ENCODE measurements at regions of chr22 and their contacts with region 1.

Region 1: DNA sequence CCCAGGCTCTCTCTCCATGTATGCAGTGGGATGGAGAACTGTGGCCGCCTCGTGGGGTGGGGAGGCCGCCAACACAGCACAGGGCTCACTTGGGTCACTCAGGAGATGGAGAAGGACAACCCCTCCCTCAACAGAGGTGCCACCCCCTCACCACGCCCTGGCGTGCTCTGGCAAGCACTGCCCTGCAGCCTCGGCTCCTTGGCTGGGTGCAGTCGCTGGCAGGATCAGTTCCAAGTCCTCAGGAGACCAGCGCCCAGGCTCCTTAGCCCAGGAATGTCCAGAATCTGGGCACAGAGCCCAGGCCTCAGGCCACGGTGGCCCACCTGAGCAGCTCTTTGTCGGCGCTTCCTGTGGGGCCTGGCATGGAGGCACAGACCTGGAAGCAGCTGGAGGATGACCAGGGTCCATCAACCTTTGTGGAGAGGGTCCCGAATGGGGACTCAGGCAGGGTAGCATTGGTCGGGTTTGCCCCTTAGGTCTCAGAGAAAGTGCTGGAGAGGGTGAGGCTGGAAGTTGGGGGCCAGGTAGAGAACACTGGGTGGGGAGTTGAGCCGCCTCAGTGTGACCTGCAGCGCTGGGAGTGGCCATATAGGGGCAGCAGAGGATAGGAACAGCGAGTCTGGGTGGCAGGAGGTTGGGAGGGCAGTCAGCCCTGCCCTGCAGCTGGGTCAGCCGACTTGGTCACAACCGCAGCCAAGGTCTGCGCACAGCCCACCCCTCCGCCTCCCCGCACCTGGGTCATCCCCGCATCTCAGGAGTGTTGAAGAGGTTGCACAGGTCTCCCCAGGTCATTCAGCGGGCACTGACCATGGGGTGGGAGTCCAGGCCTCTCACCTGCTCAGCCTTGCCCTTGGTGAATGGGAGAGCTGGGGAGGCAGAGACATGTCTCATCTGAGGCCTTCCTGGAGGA is 8.2 kb downstream of the SUSD2 start:
- DNase-seq: peak; percentile 74 to 81
- ATAC-seq: peak; percentile 86 to 96 (median 90)
- H3K4me3 ChIP-seq: no peak overlapping the region
- H3K27ac ChIP-seq: no peak overlapping the region
- H3K4me1 ChIP-seq: no peaks in the 10 kb centered on the region
- H3K27me3 ChIP-seq: peaks cover 0 to 2% (median 0%) of the 10 kb centered on the region in 3 donors
- CTCF ChIP-seq: peak; percentile 77

Region 2: GRCh38 chr22:24230911-24231656 is 41.6 kb after region 1 on chr22:
- intact Hi-C with region 1: loop called in 1 of 2 experiments (anchors 5 kb)
- DNase-seq: peak in 1 of 2 donors; percentile 65
- ATAC-seq: no peak
- H3K4me3 ChIP-seq: no peak overlapping the region
- H3K27ac ChIP-seq: no peak overlapping the region
- H3K4me1 ChIP-seq: no peaks in the 10 kb centered on the region
- H3K27me3 ChIP-seq: peaks cover 0 to 2% (median 0%) of the 10 kb centered on the region in 3 donors
- CTCF ChIP-seq: no peak

Region 3: DNA sequence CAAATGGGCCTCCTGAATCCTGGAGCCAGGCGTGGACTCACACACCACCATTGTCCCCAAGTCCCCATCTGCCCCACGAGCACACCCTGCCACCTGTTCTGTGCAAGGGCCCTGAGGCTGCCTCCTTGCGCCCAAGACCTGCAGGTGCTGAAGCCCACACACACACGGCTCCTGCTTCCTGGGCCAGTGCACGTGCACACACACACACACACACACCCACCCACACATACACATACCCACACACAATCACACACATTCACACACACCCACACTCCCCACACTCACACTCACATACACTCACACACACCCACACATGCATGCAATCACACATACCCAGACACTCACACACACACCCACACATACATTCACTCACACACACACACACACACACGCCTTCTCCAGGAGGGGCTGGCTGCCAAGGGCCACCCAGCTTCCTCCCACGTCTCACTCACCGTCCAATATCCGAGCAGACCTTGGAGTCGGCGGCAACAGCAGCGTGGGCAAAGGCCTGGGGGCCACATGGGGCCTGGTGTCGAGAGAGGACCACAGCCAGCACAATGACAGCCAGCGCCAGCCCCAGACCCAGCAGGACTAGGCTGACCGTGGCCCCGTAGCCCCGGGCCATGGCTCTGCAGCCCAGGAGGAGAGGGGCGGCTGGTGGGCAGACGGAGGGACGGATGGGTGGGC is 54.7 kb after region 1 on chr22:
- intact Hi-C with region 1: loop called (anchors 5 kb)
- DNase-seq: peak; percentile 32 to 61
- ATAC-seq: no peak
- H3K4me3 ChIP-seq: peak overlapping the region; percentile 44
- H3K27ac ChIP-seq: peak overlapping the region; percentile 30
- H3K4me1 ChIP-seq: peaks cover 4% of the 10 kb centered on the region
- H3K27me3 ChIP-seq: no peaks in the 10 kb centered on the region
- CTCF ChIP-seq: no peak

Measured in psoas muscle (tissue), 8 donors.